ENCODE measurements at regions of chr6 and their contacts with region 1.

Region 1: GRCh38 chr6:151765444-151765886 is 42.0 kb upstream of the ESR1 start:
- DNase-seq: peak; percentile 67
- ATAC-seq: peak; percentile 61
- H3K4me3 ChIP-seq: no peak overlapping the region
- H3K4me3 Mint-ChIP-seq: no peak overlapping the region
- H3K27ac ChIP-seq: no peak overlapping the region
- H3K27ac Mint-ChIP-seq: no peak overlapping the region
- H3K4me1 ChIP-seq: peaks cover 5 to 12% of the 10 kb centered on the region in 2 donors
- H3K4me1 Mint-ChIP-seq: peaks cover 22% of the 10 kb centered on the region
- H3K27me3 ChIP-seq: no peaks in the 10 kb centered on the region
- H3K27me3 Mint-ChIP-seq: no peaks in the 10 kb centered on the region
- CTCF ChIP-seq: peak; percentile 94

Region 2: GRCh38 chr6:151702851-151703611 is 62.4 kb before region 1 on chr6:
- CTCF ChIA-PET with region 1: interaction called, 10 read pairs
- POLR2A ChIA-PET with region 1: no interaction called
- intact Hi-C with region 1: loop called (anchors 10 kb)
- DNase-seq: no peak
- ATAC-seq: no peak
- H3K4me3 ChIP-seq: no peak overlapping the region
- H3K4me3 Mint-ChIP-seq: peak overlapping the region; percentile 29
- H3K27ac ChIP-seq: no peak overlapping the region
- H3K27ac Mint-ChIP-seq: no peak overlapping the region
- H3K4me1 ChIP-seq: peaks cover 13 to 27% of the 10 kb centered on the region in 2 donors
- H3K4me1 Mint-ChIP-seq: peaks cover 28% of the 10 kb centered on the region
- H3K27me3 ChIP-seq: no peaks in the 10 kb centered on the region
- H3K27me3 Mint-ChIP-seq: no peaks in the 10 kb centered on the region
- CTCF ChIP-seq: no peak

Region 3: GRCh38 chr6:151784441-151785214 is 19.2 kb after region 1 on chr6:
- CTCF ChIA-PET with region 1: no interaction called
- POLR2A ChIA-PET with region 1: no interaction called
- intact Hi-C with region 1: no loop called
- DNase-seq: no peak
- ATAC-seq: no peak
- H3K4me3 ChIP-seq: no peak overlapping the region
- H3K4me3 Mint-ChIP-seq: no peak overlapping the region
- H3K27ac ChIP-seq: no peak overlapping the region
- H3K27ac Mint-ChIP-seq: no peak overlapping the region
- H3K4me1 ChIP-seq: no peaks in the 10 kb centered on the region
- H3K4me1 Mint-ChIP-seq: no peaks in the 10 kb centered on the region
- H3K27me3 ChIP-seq: no peaks in the 10 kb centered on the region
- H3K27me3 Mint-ChIP-seq: no peaks in the 10 kb centered on the region
- CTCF ChIP-seq: no peak

Region 4: GRCh38 chr6:152124429-152125074 is 359.1 kb after region 1 on chr6:
- CTCF ChIA-PET with region 1: interaction called, 90 read pairs
- POLR2A ChIA-PET with region 1: no interaction called
- intact Hi-C with region 1: loop called (anchors 1 kb)
- DNase-seq: peak; percentile 59
- ATAC-seq: peak; percentile 57
- H3K4me3 ChIP-seq: no peak overlapping the region
- H3K4me3 Mint-ChIP-seq: no peak overlapping the region
- H3K27ac ChIP-seq: no peak overlapping the region
- H3K27ac Mint-ChIP-seq: no peak overlapping the region
- H3K4me1 ChIP-seq: no peaks in the 10 kb centered on the region
- H3K4me1 Mint-ChIP-seq: peaks cover 2% of the 10 kb centered on the region
- H3K27me3 ChIP-seq: no peaks in the 10 kb centered on the region
- H3K27me3 Mint-ChIP-seq: no peaks in the 10 kb centered on the region
- CTCF ChIP-seq: peak; percentile 75

Region 5: GRCh38 chr6:152267967-152268845 is 502.7 kb after region 1 on chr6:
- CTCF ChIA-PET with region 1: interaction called, 11 read pairs
- POLR2A ChIA-PET with region 1: no interaction called
- intact Hi-C with region 1: loop called (anchors 1 kb)
- DNase-seq: peak; percentile 32
- ATAC-seq: no peak
- H3K4me3 ChIP-seq: no peak overlapping the region
- H3K4me3 Mint-ChIP-seq: no peak overlapping the region
- H3K27ac ChIP-seq: no peak overlapping the region
- H3K27ac Mint-ChIP-seq: no peak overlapping the region
- H3K4me1 ChIP-seq: no peaks in the 10 kb centered on the region
- H3K4me1 Mint-ChIP-seq: no peaks in the 10 kb centered on the region
- H3K27me3 ChIP-seq: no peaks in the 10 kb centered on the region
- H3K27me3 Mint-ChIP-seq: no peaks in the 10 kb centered on the region
- CTCF ChIP-seq: peak; percentile 66